ENCODE measurements at regions of chr2 and their contacts with region 1.

Region 1: GRCh38 chr2:16665748-16666448 is at the start of gene CYRIA:
- DNase-seq: peak; percentile 65
- H3K4me3 Mint-ChIP-seq: peak within 1 kb of the TSS; percentile 78
- H3K27ac Mint-ChIP-seq: peak within 1 kb of the TSS; percentile 73
- H3K4me1 Mint-ChIP-seq: peaks cover 16% of the 10 kb centered on the region
- H3K27me3 Mint-ChIP-seq: peaks cover 57% of the 10 kb centered on the region
- total RNA-seq, gene CYRIA: 1.0 to 1.2 TPM

Region 2: GRCh38 chr2:16727256-16727655 is 61.4 kb after region 1 on chr2:
- CTCF ChIA-PET with region 1: no interaction called
- intact Hi-C with region 1: loop called (anchors 1 kb)
- DNase-seq: no peak
- H3K4me3 Mint-ChIP-seq: no peak overlapping the region
- H3K27ac Mint-ChIP-seq: no peak overlapping the region
- H3K4me1 Mint-ChIP-seq: peaks cover 27% of the 10 kb centered on the region
- H3K27me3 Mint-ChIP-seq: peaks cover 23% of the 10 kb centered on the region

Region 3: GRCh38 chr2:16745466-16745865 is 79.6 kb after region 1 on chr2:
- CTCF ChIA-PET with region 1: no interaction called
- intact Hi-C with region 1: loop called (anchors 2 kb)
- DNase-seq: peak; percentile 43
- H3K4me3 Mint-ChIP-seq: no peak overlapping the region
- H3K27ac Mint-ChIP-seq: no peak overlapping the region
- H3K4me1 Mint-ChIP-seq: peaks cover 29% of the 10 kb centered on the region
- H3K27me3 Mint-ChIP-seq: peaks cover 20% of the 10 kb centered on the region

Measured in activated naive CD4-positive, alpha-beta T cell treated with anti-CD3 and anti-CD28 coated beads for 36 hours (primary cell).